Heart left ventricle (tissue), 16 donors: ENCODE measurements at regions of chr5 and their contacts with region 1.

Region 1: GRCh38 chr5:148314204-148314603 is 2.0 kb downstream of the SPINK7 start:
- DNase-seq: no peak
- ATAC-seq: peak in 1 of 4 donors; percentile 36
- H3K4me3 ChIP-seq: no peak overlapping the region
- H3K27ac ChIP-seq: no peak overlapping the region
- H3K4me1 ChIP-seq: peaks cover 0 to 15% (median 0%) of the 10 kb centered on the region in 12 donors
- H3K27me3 ChIP-seq: no peaks in the 10 kb centered on the region
- CTCF ChIP-seq: peak in 1 of 12 donors; percentile 18
- POLR2A ChIP-seq: no peak

Region 2: DNA sequence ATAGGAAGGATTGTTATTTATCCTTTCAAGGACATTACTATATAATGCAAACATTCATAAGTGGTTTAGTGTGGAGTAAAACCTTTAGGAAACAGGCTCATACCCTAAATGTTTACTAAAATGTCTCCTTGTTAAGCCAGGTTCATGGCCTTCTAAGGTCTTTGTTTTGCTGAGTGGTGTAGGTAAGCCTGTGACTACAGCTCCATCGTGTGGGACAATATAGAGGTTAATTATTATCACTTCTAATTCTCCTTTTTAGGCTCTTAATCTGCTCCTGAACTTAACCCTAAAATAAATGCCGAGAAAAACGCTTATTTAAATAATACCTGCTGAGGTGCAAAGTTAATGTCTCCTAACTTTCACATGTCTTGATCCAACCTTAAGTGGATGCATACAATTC is 206.6 kb before region 1 on chr5:
- intact Hi-C with region 1: no loop called
- DNase-seq: no peak
- ATAC-seq: no peak
- H3K4me3 ChIP-seq: no peak overlapping the region
- H3K27ac ChIP-seq: no peak overlapping the region
- H3K4me1 ChIP-seq: no peaks in the 10 kb centered on the region
- H3K27me3 ChIP-seq: no peaks in the 10 kb centered on the region
- CTCF ChIP-seq: peak in 7 of 12 donors; percentile 23 to 42 (median 33)
- POLR2A ChIP-seq: no peak

Region 3: GRCh38 chr5:148364343-148364742 is 50.1 kb after region 1 on chr5:
- intact Hi-C with region 1: loop called in 1 of 10 experiments (anchors 10 kb)
- DNase-seq: no peak
- ATAC-seq: no peak
- H3K4me3 ChIP-seq: no peak overlapping the region
- H3K27ac ChIP-seq: no peak overlapping the region
- H3K4me1 ChIP-seq: peaks cover 0 to 4% (median 0%) of the 10 kb centered on the region in 12 donors
- H3K27me3 ChIP-seq: no peaks in the 10 kb centered on the region
- CTCF ChIP-seq: no peak
- POLR2A ChIP-seq: no peak

Region 4: GRCh38 chr5:148708854-148709253 is 394.6 kb after region 1 on chr5:
- intact Hi-C with region 1: no loop called
- DNase-seq: no peak
- ATAC-seq: no peak
- H3K4me3 ChIP-seq: no peak overlapping the region
- H3K27ac ChIP-seq: no peak overlapping the region
- H3K4me1 ChIP-seq: peaks cover 0 to 8% (median 0%) of the 10 kb centered on the region in 12 donors
- H3K27me3 ChIP-seq: no peaks in the 10 kb centered on the region
- CTCF ChIP-seq: no peak
- POLR2A ChIP-seq: no peak

Region 5: DNA sequence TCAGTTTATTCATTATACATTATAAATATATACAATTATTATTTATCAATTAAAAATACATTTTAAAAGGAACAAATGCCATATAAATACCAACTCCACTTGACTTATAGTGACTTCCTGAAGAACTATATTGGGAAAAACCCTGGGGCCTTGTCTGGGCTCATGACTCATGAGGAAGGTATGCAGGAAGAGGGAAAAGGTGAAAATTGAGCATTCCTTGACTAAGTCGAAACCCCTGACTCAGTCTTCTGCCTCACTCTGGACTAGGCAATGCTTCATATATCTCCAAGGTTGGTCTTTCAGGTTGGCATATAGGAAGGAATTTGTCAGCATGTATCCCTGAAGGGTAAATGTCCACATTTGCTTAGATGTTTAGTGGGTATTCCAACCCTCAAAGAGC is 670.1 kb after region 1 on chr5:
- intact Hi-C with region 1: no loop called
- DNase-seq: no peak
- ATAC-seq: no peak
- H3K4me3 ChIP-seq: no peak overlapping the region
- H3K27ac ChIP-seq: no peak overlapping the region
- H3K4me1 ChIP-seq: peaks cover 0 to 10% (median 0%) of the 10 kb centered on the region in 12 donors
- H3K27me3 ChIP-seq: no peaks in the 10 kb centered on the region
- CTCF ChIP-seq: no peak
- POLR2A ChIP-seq: no peak